Gastrocnemius medialis (tissue), 4 donors: ENCODE measurements at regions of chr14 and their contacts with region 1.

Region 1: GRCh38 chr14:21383848-21384493 is at the start of gene SUPT16H:
- DNase-seq: peak; percentile 91 to 94
- ATAC-seq: peak; percentile 96 to 98
- H3K4me3 ChIP-seq: peak within 1 kb of the TSS; percentile 62 to 93 (median 90)
- H3K27ac ChIP-seq: peak within 1 kb of the TSS; percentile 88 to 95 (median 92)
- H3K4me1 ChIP-seq: peaks cover 16 to 29% of the 10 kb centered on the region in 2 donors
- H3K27me3 ChIP-seq: no peaks in the 10 kb centered on the region
- CTCF ChIP-seq: no peak
- POLR2A ChIP-seq: peak; percentile 43 to 73
- total RNA-seq, gene SUPT16H: 27.2 to 33.5 (median 30.8) TPM

Region 2: DNA sequence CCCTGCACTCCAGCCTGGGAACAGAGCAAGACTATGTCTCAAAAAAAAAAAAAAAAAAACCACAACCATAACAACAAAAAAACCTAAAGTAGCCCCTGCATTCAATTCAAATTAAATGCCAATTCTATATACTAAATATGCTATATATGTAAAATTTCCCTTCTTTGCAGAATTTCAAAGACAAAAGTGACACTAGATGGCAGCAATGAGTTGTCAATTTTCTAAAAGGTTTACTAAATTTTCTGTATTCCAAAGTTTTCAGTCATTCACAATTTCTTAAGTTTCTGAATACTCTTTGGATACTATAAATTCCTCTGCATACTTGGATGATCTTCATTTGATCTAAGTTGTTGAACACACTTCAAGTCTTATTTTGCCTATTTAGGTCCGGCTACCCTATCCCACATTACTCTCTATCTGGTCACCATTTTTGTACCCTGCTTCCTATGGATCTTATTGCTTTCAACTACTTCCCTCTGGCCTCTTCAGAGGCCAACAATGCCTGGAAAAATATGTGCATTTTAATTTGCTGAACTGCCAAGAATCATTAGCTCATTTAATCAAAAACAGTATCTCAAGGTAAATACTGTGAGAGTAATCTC is 142.7 kb before region 1 on chr14:
- in situ Hi-C with region 1: loop called in 1 of 4 experiments (anchors 25 kb)
- intact Hi-C with region 1: loop called (anchors 5 kb)
- DNase-seq: no peak
- ATAC-seq: no peak
- H3K4me3 ChIP-seq: no peak overlapping the region
- H3K27ac ChIP-seq: no peak overlapping the region
- H3K4me1 ChIP-seq: peaks cover 24 to 32% of the 10 kb centered on the region in 2 donors
- H3K27me3 ChIP-seq: no peaks in the 10 kb centered on the region
- CTCF ChIP-seq: peak in 2 of 5 experiments; percentile 24 to 49
- POLR2A ChIP-seq: no peak

Region 3: GRCh38 chr14:21269252-21270046 is 114.5 kb before region 1 on chr14 and contains the start of gene HNRNPC:
- in situ Hi-C with region 1: no loop called
- intact Hi-C with region 1: loop called (anchors 5 kb)
- DNase-seq: peak; percentile 99 to 100
- ATAC-seq: peak; percentile 97 to 99
- H3K4me3 ChIP-seq: peak within 1 kb of the TSS; percentile 69 to 95 (median 81)
- H3K27ac ChIP-seq: peak within 1 kb of the TSS; percentile 92 to 99 (median 95)
- H3K4me1 ChIP-seq: peaks cover 34 to 38% of the 10 kb centered on the region in 2 donors
- H3K27me3 ChIP-seq: no peaks in the 10 kb centered on the region
- CTCF ChIP-seq: no peak
- POLR2A ChIP-seq: peak; percentile 95 to 96
- total RNA-seq, gene HNRNPC: 281 to 357 (median 318) TPM

Region 4: DNA sequence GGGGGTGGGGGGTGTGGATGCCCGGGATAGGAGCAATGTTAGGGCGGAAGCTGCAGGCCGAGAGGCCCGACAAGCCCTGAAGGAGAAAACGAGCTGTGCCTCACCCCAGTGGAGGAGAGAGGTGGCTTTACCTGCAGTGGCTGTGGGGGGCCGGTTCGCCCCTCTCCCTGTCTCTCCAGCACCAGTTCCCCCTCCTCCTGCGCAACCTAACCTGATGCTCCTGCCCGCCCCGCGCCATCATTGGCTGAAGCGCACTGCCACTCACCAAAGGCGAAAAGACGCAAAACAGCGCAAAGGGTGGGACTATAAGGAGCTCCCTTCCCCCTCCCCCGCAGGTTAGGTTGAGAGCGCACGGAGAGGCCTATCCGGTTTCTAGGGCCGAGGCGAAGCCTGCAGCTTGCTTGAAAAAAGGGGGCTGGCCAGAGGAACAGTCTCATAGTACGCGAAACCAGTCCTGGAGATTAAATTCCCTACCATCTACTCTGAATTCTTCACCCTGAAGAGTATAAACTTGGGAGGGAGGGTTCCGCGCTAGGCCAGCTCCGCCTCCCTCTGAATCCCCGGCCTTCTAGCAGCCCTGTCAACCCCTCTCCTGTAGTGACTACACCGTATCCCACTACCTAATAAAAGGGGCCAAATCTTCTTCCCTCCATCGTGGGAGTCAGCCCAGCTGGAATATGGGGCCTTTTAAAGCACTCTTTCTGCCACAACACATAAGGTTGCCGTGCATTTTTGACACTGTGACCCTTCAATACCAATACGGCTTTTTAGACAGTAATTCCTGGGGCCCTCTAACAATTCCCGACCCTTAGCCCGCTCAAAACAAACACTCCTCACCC is 53.3 kb after region 1 on chr14:
- in situ Hi-C with region 1: no loop called
- intact Hi-C with region 1: loop called (anchors 1 kb)
- DNase-seq: peak; percentile 97 to 99
- ATAC-seq: peak; percentile 99 to 100
- H3K4me3 ChIP-seq: peak overlapping the region; percentile 76 to 99 (median 92)
- H3K27ac ChIP-seq: peak overlapping the region; percentile 81 to 88 (median 86)
- H3K4me1 ChIP-seq: peaks cover 23 to 25% of the 10 kb centered on the region in 2 donors
- H3K27me3 ChIP-seq: no peaks in the 10 kb centered on the region
- CTCF ChIP-seq: no peak
- POLR2A ChIP-seq: peak; percentile 30 to 41

Region 5: DNA sequence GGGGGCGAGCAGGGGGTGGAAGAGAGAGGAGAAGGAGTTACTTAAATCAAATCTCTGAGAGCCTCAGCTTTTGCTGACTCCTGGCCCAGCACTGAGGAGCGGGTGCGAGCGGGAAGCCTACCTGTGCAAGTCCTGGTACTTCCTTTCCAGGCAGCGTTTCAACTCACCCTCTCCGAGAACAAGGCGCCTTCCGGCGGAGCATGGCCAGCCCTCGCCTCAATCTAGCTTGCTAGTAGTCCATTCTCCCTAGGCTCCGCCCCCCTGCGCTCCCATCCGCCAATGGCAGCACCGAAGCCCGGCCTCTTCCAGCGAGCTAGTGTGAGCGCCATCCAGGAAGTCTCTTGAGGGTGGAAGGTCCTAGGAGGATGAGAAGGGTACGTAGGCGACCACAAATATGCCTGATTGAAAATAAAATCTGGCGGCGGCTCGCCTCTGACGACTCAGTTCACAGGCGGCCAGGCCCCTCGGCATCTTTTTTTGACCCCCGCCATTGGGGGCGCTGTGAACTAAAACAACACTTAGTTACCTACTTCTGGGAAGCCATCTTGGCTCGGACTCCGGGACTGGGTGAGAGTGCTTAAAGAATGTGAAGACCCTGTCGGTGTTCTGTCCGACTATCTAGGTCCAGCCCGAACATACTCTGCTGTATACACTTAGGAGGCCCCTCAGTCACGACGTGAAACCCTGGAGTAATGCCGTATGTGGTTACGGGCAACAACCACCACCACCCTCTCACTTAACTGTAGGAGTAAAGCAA is 72.1 kb after region 1 on chr14 and contains the start of gene CHD8:
- in situ Hi-C with region 1: no loop called
- intact Hi-C with region 1: loop called (anchors 1 kb)
- DNase-seq: peak; percentile 99 to 100
- ATAC-seq: peak; percentile 98 to 99
- H3K4me3 ChIP-seq: peak within 1 kb of the TSS; percentile 68 to 97 (median 92)
- H3K27ac ChIP-seq: peak within 1 kb of the TSS; percentile 88 to 98 (median 94)
- H3K4me1 ChIP-seq: peaks cover 12 to 15% of the 10 kb centered on the region in 2 donors
- H3K27me3 ChIP-seq: no peaks in the 10 kb centered on the region
- CTCF ChIP-seq: peak; percentile 41 to 61 (median 54)
- POLR2A ChIP-seq: peak; percentile 27 to 58
- total RNA-seq, gene CHD8: 23.8 to 49.5 (median 37.6) TPM

Region 6: DNA sequence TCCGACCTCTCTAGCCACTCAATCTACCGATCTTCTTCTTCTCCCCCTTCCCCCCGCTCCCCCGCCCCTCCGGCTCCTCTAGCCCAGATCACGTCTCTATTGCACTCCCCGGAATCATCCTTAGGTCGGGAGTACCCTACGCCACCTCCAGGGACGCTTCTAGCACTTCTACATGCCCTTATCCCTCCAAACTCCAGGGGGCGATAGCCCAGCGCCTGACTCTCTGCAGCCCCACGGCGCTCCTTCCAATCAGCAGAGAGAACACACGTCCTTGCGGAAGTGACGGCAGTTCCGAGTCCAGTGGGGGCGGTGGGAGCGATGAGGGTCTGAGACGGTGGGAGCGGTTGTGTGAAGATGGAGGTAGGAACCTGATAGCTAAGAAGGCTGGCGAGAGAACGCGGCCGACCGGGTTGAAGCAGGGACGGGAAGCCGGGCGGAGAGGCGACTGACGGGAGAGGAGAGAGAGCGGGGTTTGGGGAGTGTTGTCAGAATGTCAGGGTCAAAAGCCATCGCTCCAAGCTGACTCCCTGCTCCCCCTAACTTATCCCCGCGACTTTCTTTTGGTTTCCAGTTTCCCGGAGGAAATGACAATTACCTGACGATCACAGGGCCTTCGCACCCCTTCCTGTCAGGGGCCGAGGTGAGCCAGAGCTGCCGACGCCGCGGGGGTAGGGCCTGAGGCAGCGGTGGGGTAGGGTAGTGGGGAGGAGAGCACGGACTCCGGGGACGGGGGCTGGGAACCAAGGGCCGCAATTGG is 93.1 kb after region 1 on chr14 and contains the starts of genes RAB2B and TOX4:
- in situ Hi-C with region 1: no loop called
- intact Hi-C with region 1: loop called (anchors 2 kb)
- DNase-seq: peak; percentile 97 to 98
- ATAC-seq: peak; percentile 98 to 99
- H3K4me3 ChIP-seq: peak within 1 kb of the TSS; percentile 66 to 90 (median 80)
- H3K27ac ChIP-seq: peak within 1 kb of the TSS; percentile 83 to 89 (median 87)
- H3K4me1 ChIP-seq: peaks cover 19 to 20% of the 10 kb centered on the region in 2 donors
- H3K27me3 ChIP-seq: no peaks in the 10 kb centered on the region
- CTCF ChIP-seq: peak; percentile 90 to 100 (median 99)
- POLR2A ChIP-seq: peak; percentile 68 to 87
- total RNA-seq, gene RAB2B: 4.8 to 13.6 (median 8.0) TPM
- total RNA-seq, gene TOX4: 57.2 to 135 (median 112) TPM

Region 7: DNA sequence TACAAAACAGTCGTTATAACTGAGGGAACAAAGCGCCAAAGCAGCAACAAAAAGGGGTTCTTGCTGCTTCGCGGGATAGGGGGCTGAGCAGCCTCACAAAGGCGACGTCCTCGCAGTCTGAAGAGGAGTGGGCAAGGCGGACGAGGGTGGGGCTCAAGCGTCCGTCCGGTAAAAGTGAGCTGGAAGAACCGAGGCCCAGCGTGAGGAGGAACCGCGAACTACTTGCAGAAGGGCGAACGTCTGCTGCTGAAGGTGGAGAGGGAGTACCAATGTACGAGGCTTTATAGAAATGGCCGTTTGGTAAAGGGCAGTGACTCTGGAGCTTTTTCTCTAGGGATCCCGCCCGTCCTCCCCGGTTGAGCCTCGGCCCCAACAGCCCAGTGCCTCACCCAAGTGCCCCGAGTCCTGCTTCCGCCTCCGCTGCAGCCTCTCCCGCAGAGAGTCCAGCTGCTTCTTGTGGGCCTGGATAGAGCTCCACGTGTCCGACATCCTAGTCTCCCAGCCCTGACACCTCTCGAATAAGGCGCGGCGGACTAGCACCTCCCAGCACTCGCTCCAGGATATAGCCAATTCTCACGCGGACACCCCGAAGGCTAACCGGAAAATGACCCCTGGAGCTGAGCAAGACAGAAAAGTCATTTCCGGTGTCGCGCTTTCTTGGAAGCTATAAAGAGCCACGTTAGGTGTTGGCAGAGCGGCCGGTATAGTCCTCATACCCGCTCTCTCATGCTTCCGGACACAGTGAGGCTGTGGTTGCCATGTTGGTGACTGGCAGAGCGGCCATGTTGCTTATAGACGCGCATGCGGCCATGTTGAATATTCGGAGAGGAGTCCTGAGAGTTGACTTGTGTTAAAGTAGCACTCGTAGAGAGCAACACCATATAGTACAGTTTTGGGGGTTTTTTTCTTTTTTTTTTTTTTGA is 127.0 kb after region 1 on chr14 and contains the start of gene METTL3:
- in situ Hi-C with region 1: no loop called
- intact Hi-C with region 1: loop called (anchors 2 kb)
- DNase-seq: peak; percentile 98 to 99
- ATAC-seq: peak; percentile 99 to 100
- H3K4me3 ChIP-seq: peak within 1 kb of the TSS; percentile 73 to 96 (median 87)
- H3K27ac ChIP-seq: peak within 1 kb of the TSS; percentile 89 to 96 (median 91)
- H3K4me1 ChIP-seq: peaks cover 16 to 17% of the 10 kb centered on the region in 2 donors
- H3K27me3 ChIP-seq: no peaks in the 10 kb centered on the region
- CTCF ChIP-seq: no peak
- POLR2A ChIP-seq: peak; percentile 52 to 63
- total RNA-seq, gene METTL3: 16.5 to 52.4 (median 34.6) TPM

Region 8: GRCh38 chr14:21822109-21822508 is 438.1 kb after region 1 on chr14:
- in situ Hi-C with region 1: no loop called
- intact Hi-C with region 1: no loop called
- DNase-seq: no peak
- ATAC-seq: no peak
- H3K4me3 ChIP-seq: no peak overlapping the region
- H3K27ac ChIP-seq: no peak overlapping the region
- H3K4me1 ChIP-seq: no peaks in the 10 kb centered on the region
- H3K27me3 ChIP-seq: no peaks in the 10 kb centered on the region
- CTCF ChIP-seq: no peak
- POLR2A ChIP-seq: no peak